CD8-positive, alpha-beta memory T cell (primary cell): ENCODE measurements at regions of chr10 and their contacts with region 1.

Region 1: GRCh38 chr10:11986593-11987216 is 55.9 kb downstream of the UPF2 start:
- DNase-seq: peak; percentile 34 to 72 (median 52)
- H3K4me3 ChIP-seq: no peak overlapping the region
- H3K4me3 Mint-ChIP-seq: no peak overlapping the region
- H3K27ac ChIP-seq: no peak overlapping the region
- H3K27ac Mint-ChIP-seq: peak overlapping the region in 2 of 8 donors; percentile 0 to 3
- H3K4me1 ChIP-seq: no peaks in the 10 kb centered on the region
- H3K4me1 Mint-ChIP-seq: peaks cover 8 to 13% (median 9%) of the 10 kb centered on the region in 3 donors
- H3K27me3 ChIP-seq: no peaks in the 10 kb centered on the region
- H3K27me3 Mint-ChIP-seq: no peaks in the 10 kb centered on the region

Region 2: DNA sequence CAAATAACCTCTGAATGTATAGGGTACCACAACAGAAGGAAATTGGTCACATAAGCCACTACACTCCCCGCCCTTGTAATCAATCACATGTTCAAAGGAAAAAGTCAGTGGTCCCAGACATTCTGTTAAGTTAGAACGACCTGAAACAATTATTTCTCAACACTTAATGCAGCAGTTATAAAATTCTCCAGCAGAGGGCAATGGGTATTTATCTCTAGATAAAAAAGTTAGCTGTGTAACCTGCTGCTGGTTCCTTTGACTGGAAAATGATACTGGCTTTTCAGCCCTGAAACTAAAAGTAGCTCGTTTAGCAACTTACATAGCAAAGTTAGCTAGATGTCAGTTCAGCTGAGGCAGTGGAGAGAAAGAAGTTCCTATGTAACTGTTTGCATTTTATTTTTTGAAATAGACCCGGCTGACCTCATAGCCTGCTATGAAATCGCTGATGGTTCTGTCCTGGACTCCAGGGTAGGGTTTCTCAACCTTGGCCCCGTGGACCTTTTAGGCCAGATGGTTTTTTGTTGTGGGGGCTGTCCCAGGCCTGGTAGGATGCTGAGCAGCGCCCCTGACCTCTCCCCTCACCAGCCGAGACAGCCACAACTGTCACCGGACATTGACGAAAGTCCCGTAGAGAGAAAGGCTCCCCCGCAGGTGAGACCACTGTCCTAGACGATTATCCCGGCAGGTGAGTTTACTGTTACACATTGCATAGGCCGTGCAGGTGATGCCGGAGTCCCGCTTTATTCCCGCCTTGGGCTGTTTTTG is 203.7 kb before region 1 on chr10:
- CTCF ChIA-PET with region 1: interaction called, 10 read pairs
- POLR2A ChIA-PET with region 1: no interaction called
- DNase-seq: peak in 2 of 5 donors; percentile 18 to 33
- H3K4me3 ChIP-seq: no peak overlapping the region
- H3K4me3 Mint-ChIP-seq: no peak overlapping the region
- H3K27ac ChIP-seq: no peak overlapping the region
- H3K27ac Mint-ChIP-seq: peak overlapping the region in 1 of 8 donors; percentile 53
- H3K4me1 ChIP-seq: no peaks in the 10 kb centered on the region
- H3K4me1 Mint-ChIP-seq: no peaks in the 10 kb centered on the region
- H3K27me3 ChIP-seq: no peaks in the 10 kb centered on the region
- H3K27me3 Mint-ChIP-seq: peaks cover 9 to 14% of the 10 kb centered on the region in 2 donors

Region 3: GRCh38 chr10:12271210-12271540 is 284.5 kb after region 1 on chr10:
- CTCF ChIA-PET with region 1: no interaction called
- POLR2A ChIA-PET with region 1: no interaction called
- DNase-seq: no peak
- H3K4me3 ChIP-seq: no peak overlapping the region
- H3K4me3 Mint-ChIP-seq: no peak overlapping the region
- H3K27ac ChIP-seq: no peak overlapping the region
- H3K27ac Mint-ChIP-seq: no peak overlapping the region
- H3K4me1 ChIP-seq: no peaks in the 10 kb centered on the region
- H3K4me1 Mint-ChIP-seq: no peaks in the 10 kb centered on the region
- H3K27me3 ChIP-seq: no peaks in the 10 kb centered on the region
- H3K27me3 Mint-ChIP-seq: no peaks in the 10 kb centered on the region